ENCODE measurements at regions of chr5 and their contacts with region 1.

Region 1: GRCh38 chr5:80255732-80256479 is at the start of gene SERINC5:
- DNase-seq: peak; percentile 85 to 90 (median 88)
- H3K4me3 ChIP-seq: peak within 1 kb of the TSS; percentile 78
- H3K27ac ChIP-seq: peak within 1 kb of the TSS; percentile 87 to 92
- H3K4me1 ChIP-seq: peaks cover 13% of the 10 kb centered on the region
- H3K27me3 ChIP-seq: no peaks in the 10 kb centered on the region
- CTCF ChIP-seq: no peak
- EP300 ChIP-seq: peak; percentile 44
- POLR2A ChIP-seq: peak; percentile 93
- total RNA-seq, gene SERINC5: 20.0 to 88.7 (median 49.7) TPM

Region 2: GRCh38 chr5:80141147-80141671 is 114.7 kb before region 1 on chr5:
- intact Hi-C with region 1: loop called in 3 of 4 experiments (anchors 5 to 10 kb)
- DNase-seq: peak; percentile 83 to 89 (median 87)
- H3K4me3 ChIP-seq: no peak overlapping the region
- H3K27ac ChIP-seq: peak overlapping the region; percentile 43 to 88
- H3K4me1 ChIP-seq: peaks cover 18% of the 10 kb centered on the region
- H3K27me3 ChIP-seq: no peaks in the 10 kb centered on the region
- CTCF ChIP-seq: no peak
- EP300 ChIP-seq: no peak
- POLR2A ChIP-seq: peak; percentile 39

Region 3: GRCh38 chr5:80191991-80192398 is 63.9 kb before region 1 on chr5:
- intact Hi-C with region 1: loop called in 1 of 4 experiments (anchors 5 kb)
- DNase-seq: peak in 2 of 5 donors; percentile 35 to 55
- H3K4me3 ChIP-seq: no peak overlapping the region
- H3K27ac ChIP-seq: peak overlapping the region; percentile 33 to 78
- H3K4me1 ChIP-seq: peaks cover 36% of the 10 kb centered on the region
- H3K27me3 ChIP-seq: no peaks in the 10 kb centered on the region
- CTCF ChIP-seq: no peak
- EP300 ChIP-seq: no peak
- POLR2A ChIP-seq: no peak

Region 4: GRCh38 chr5:80204808-80205614 is 50.9 kb before region 1 on chr5:
- intact Hi-C with region 1: loop called in 1 of 4 experiments (anchors 10 kb)
- DNase-seq: peak in 2 of 5 donors; percentile 44 to 54
- H3K4me3 ChIP-seq: no peak overlapping the region
- H3K27ac ChIP-seq: peak overlapping the region in 1 of 2 donors; percentile 47
- H3K4me1 ChIP-seq: peaks cover 5% of the 10 kb centered on the region
- H3K27me3 ChIP-seq: no peaks in the 10 kb centered on the region
- CTCF ChIP-seq: no peak
- EP300 ChIP-seq: no peak
- POLR2A ChIP-seq: no peak

Region 5: GRCh38 chr5:80481019-80481893 is 225.3 kb after region 1 on chr5:
- intact Hi-C with region 1: no loop called
- DNase-seq: no peak
- H3K4me3 ChIP-seq: no peak overlapping the region
- H3K27ac ChIP-seq: no peak overlapping the region
- H3K4me1 ChIP-seq: no peaks in the 10 kb centered on the region
- H3K27me3 ChIP-seq: no peaks in the 10 kb centered on the region
- CTCF ChIP-seq: no peak
- EP300 ChIP-seq: no peak
- POLR2A ChIP-seq: no peak